Activated CD4-positive, alpha-beta memory T cell treated with anti-CD3 and anti-CD28 coated beads for 36 hours (primary cell): ENCODE measurements at regions of chr7 and their contacts with region 1.

Region 1: GRCh38 chr7:1231214-1232102 is 1.2 kb upstream of the UNCX start:
- DNase-seq: no peak
- H3K4me3 Mint-ChIP-seq: no peak overlapping the region
- H3K27ac Mint-ChIP-seq: no peak overlapping the region
- H3K4me1 Mint-ChIP-seq: peaks cover 20% of the 10 kb centered on the region
- H3K27me3 Mint-ChIP-seq: peaks cover 56% of the 10 kb centered on the region

Region 2: GRCh38 chr7:964401-965231 is 266.8 kb before region 1 on chr7:
- CTCF ChIA-PET with region 1: no interaction called
- POLR2A ChIA-PET with region 1: no interaction called
- intact Hi-C with region 1: no loop called
- DNase-seq: no peak
- H3K4me3 Mint-ChIP-seq: no peak overlapping the region
- H3K27ac Mint-ChIP-seq: no peak overlapping the region
- H3K4me1 Mint-ChIP-seq: peaks cover 14% of the 10 kb centered on the region
- H3K27me3 Mint-ChIP-seq: peaks cover 4% of the 10 kb centered on the region

Region 3: GRCh38 chr7:1193593-1194424 is 37.6 kb before region 1 on chr7:
- CTCF ChIA-PET with region 1: no interaction called
- POLR2A ChIA-PET with region 1: no interaction called
- intact Hi-C with region 1: no loop called
- DNase-seq: peak; percentile 59
- H3K4me3 Mint-ChIP-seq: no peak overlapping the region
- H3K27ac Mint-ChIP-seq: no peak overlapping the region
- H3K4me1 Mint-ChIP-seq: peaks cover 7% of the 10 kb centered on the region
- H3K27me3 Mint-ChIP-seq: peaks cover 12% of the 10 kb centered on the region

Region 4: DNA sequence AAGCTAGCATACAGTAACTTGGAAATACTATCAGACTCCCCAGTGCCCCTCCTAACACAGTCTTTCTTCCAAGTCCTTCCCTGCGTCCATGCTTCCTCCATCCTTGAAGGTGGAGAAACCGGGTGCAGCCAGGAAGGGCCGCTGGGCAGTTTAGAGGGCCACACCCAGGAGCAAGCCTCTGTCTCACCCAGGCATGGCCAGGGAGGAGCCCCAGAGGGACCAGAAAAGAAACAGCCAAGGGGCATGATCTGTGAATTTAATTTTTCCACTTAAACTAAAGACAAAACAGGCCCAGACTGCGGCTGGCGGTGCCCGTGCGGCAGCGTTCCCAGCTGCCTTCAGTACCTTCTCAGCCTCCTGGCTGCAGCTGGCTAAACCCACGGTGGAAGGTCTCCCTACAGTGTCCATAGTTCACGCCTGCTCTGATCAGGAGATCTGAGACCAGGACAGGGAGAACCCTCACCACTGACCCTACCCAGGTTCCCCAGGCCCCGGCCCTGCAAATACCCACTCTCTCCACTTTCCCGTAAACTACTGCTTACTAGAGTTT is 14.1 kb after region 1 on chr7:
- CTCF ChIA-PET with region 1: interaction called, 7 read pairs
- POLR2A ChIA-PET with region 1: no interaction called
- intact Hi-C with region 1: loop called (anchors 2 kb)
- DNase-seq: no peak
- H3K4me3 Mint-ChIP-seq: no peak overlapping the region
- H3K27ac Mint-ChIP-seq: peak overlapping the region; percentile 18
- H3K4me1 Mint-ChIP-seq: peaks cover 11% of the 10 kb centered on the region
- H3K27me3 Mint-ChIP-seq: peaks cover 62% of the 10 kb centered on the region